OCI-LY7 (cell line): ENCODE measurements at regions of chr14 and their contacts with region 1.

Region 1: DNA sequence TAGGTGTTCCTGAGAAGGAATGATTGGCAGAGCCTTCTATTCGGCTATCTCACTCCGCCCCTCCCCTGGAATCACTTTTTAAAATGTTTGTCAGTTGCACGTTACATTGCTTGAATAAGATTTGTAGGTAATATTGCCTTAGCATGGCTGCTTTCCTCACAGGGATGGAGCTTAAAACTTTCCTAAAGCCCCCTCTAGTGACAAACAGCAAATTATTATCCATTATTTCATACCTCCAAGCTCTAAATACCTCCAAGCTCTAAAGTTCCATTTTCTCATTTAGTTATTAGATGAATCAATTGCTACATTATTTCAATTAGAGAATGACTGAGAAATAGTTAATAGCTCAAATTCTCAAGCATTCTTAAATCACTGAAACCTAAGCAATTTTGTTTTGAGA is 5.1 kb upstream of the SPATA7 start:
- DNase-seq: peak; percentile 20
- H3K4me3 ChIP-seq: no peak overlapping the region
- H3K27ac ChIP-seq: no peak overlapping the region
- H3K4me1 ChIP-seq: peaks cover 8% of the 10 kb centered on the region
- CTCF ChIP-seq: peak; percentile 65

Region 2: GRCh38 chr14:88181072-88181471 is 199.3 kb before region 1 on chr14:
- CTCF ChIA-PET with region 1: no interaction called
- POLR2A ChIA-PET with region 1: interaction called, 11 read pairs
- intact Hi-C with region 1: no loop called
- DNase-seq: no peak
- H3K4me3 ChIP-seq: no peak overlapping the region
- H3K27ac ChIP-seq: no peak overlapping the region
- H3K4me1 ChIP-seq: no peaks in the 10 kb centered on the region
- CTCF ChIP-seq: no peak

Region 3: GRCh38 chr14:88189417-88190191 is 190.8 kb before region 1 on chr14:
- CTCF ChIA-PET with region 1: interaction called, 9 read pairs
- POLR2A ChIA-PET with region 1: interaction called, 5 read pairs
- intact Hi-C with region 1: loop called (anchors 1 kb)
- DNase-seq: peak; percentile 73
- H3K4me3 ChIP-seq: peak overlapping the region; percentile 40
- H3K27ac ChIP-seq: no peak overlapping the region
- H3K4me1 ChIP-seq: peaks cover 6% of the 10 kb centered on the region
- CTCF ChIP-seq: peak; percentile 91

Region 4: DNA sequence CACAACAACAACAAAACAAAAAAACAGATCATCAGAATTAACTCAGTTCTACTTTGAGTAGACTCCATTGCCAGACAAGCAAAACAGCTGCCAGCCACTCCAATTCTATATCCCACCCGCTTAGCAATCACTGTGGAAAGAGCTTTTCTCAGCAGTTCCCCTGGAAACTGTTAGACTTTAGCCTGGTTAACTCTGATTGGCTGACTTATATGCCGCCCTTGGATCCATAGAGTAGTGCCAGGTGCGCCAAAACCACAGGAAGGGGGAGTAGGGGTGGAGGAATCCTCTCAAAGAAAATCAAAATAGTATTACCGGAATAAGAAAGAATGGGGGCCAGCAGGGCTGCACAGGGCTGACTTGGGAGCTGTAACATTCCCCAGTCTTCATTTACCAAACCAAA is 417.7 kb after region 1 on chr14:
- CTCF ChIA-PET with region 1: no interaction called
- POLR2A ChIA-PET with region 1: no interaction called
- intact Hi-C with region 1: no loop called
- DNase-seq: no peak
- H3K4me3 ChIP-seq: no peak overlapping the region
- H3K27ac ChIP-seq: no peak overlapping the region
- H3K4me1 ChIP-seq: peaks cover 3% of the 10 kb centered on the region
- CTCF ChIP-seq: no peak